ENCODE measurements at regions of chr17 and their contacts with region 1.

Region 1: DNA sequence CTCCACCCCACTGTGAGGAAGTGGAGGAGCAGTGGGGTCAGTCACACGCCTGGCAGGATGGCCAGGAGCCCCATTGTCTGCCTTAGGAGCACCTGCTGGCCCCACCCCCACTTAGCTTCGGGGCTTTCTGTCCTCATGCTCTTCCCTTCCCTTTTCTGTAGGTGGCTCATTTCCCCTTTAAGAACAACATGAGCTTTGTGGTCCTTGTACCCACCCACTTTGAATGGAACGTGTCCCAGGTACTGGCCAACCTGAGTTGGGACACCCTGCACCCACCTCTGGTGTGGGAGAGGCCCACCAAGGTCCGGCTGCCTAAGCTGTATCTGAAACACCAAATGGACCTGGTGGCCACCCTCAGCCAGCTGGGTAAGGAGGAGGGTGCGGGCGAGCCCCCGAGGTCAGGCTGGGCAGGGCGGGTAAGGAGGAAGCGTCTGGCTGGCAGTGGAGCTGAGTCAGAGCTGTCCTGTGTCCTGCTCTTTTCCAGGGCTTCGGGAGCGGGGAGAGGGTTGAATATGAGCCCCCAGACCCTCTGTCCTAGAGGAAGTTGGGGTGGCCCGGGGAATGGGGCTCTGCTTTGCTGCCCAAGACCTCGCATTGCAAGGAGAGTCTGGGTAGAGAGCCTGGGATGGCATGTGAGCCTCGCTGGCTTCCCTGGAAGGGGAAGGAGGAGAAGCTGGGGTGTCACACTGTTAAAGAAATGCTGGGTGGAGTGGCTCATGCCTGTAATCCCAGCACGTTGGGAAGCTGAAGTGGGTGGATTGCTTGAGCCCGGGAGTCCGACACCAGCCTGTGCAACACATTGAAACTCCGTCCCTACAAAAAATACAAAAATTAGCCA is 9.2 kb upstream of the SERPINF1 start:
- DNase-seq: no peak
- ATAC-seq: peak; percentile 86
- H3K4me3 Mint-ChIP-seq: peak overlapping the region; percentile 38
- H3K27ac Mint-ChIP-seq: no peak overlapping the region
- H3K4me1 Mint-ChIP-seq: peaks cover 15% of the 10 kb centered on the region
- H3K27me3 Mint-ChIP-seq: no peaks in the 10 kb centered on the region
- CTCF ChIP-seq: no peak

Region 2: DNA sequence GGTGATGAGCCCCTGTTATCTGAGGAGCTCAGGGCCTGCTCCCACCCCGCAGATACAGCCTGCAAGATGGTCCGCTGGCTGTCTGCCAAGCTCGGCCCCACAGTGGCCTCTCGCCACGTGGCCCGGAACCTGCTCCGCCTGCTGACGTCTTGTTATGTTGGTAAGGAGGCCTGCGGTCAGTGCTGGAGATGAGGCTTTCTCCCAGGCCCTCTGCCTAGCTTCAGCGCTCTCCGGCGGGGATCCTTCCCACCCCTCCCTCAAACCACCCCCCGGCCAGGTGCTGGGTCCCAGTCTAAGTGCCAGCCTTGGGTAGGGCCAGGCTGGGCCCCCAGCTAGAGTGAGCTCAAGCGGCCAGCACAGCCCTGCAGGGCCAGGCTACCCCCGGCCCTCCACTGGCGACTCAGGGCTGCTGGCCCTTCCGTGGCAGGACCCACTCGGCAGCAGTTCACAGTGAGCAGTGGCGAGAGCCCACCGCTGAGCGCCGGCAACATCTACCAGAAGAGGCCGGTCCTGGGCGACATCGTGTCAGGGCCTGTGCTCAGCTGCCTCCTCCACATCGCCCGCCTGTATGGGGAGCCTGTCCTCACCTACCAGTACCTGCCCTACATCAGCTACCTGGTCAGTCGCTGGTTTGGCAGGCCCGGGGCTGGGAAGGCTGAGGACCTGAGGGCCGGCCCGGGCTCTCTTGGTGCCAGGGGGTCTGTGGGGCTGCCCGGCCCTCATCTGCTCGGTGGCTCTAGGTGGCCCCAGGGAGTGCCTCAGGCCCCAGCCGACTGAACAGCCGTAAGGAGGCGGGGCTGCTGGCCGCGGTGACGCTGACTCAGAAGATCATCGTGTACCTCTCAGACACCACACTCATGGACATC is 22.1 kb before region 1 on chr17:
- CTCF ChIA-PET with region 1: interaction called, 4 read pairs
- POLR2A ChIA-PET with region 1: interaction called, 11 read pairs
- intact Hi-C with region 1: no loop called
- DNase-seq: no peak
- ATAC-seq: no peak
- H3K4me3 Mint-ChIP-seq: no peak overlapping the region
- H3K27ac Mint-ChIP-seq: peak overlapping the region; percentile 24
- H3K4me1 Mint-ChIP-seq: peaks cover 56% of the 10 kb centered on the region
- H3K27me3 Mint-ChIP-seq: no peaks in the 10 kb centered on the region
- CTCF ChIP-seq: no peak

Region 3: GRCh38 chr17:1764284-1764683 is 11.6 kb after region 1 on chr17:
- CTCF ChIA-PET with region 1: interaction called, 3 read pairs
- POLR2A ChIA-PET with region 1: interaction called, 17 read pairs
- intact Hi-C with region 1: no loop called
- DNase-seq: peak; percentile 41
- ATAC-seq: peak; percentile 85
- H3K4me3 Mint-ChIP-seq: peak overlapping the region; percentile 53
- H3K27ac Mint-ChIP-seq: peak overlapping the region; percentile 72
- H3K4me1 Mint-ChIP-seq: peaks cover 46% of the 10 kb centered on the region
- H3K27me3 Mint-ChIP-seq: no peaks in the 10 kb centered on the region
- CTCF ChIP-seq: no peak

Region 4: GRCh38 chr17:1769822-1770477 is 17.3 kb after region 1 on chr17:
- CTCF ChIA-PET with region 1: interaction called, 3 read pairs
- POLR2A ChIA-PET with region 1: interaction called, 6 read pairs
- intact Hi-C with region 1: loop called (anchors 2 kb)
- DNase-seq: no peak
- ATAC-seq: peak; percentile 46
- H3K4me3 Mint-ChIP-seq: peak overlapping the region; percentile 58
- H3K27ac Mint-ChIP-seq: peak overlapping the region; percentile 82
- H3K4me1 Mint-ChIP-seq: peaks cover 52% of the 10 kb centered on the region
- H3K27me3 Mint-ChIP-seq: no peaks in the 10 kb centered on the region
- CTCF ChIP-seq: no peak

Region 5: DNA sequence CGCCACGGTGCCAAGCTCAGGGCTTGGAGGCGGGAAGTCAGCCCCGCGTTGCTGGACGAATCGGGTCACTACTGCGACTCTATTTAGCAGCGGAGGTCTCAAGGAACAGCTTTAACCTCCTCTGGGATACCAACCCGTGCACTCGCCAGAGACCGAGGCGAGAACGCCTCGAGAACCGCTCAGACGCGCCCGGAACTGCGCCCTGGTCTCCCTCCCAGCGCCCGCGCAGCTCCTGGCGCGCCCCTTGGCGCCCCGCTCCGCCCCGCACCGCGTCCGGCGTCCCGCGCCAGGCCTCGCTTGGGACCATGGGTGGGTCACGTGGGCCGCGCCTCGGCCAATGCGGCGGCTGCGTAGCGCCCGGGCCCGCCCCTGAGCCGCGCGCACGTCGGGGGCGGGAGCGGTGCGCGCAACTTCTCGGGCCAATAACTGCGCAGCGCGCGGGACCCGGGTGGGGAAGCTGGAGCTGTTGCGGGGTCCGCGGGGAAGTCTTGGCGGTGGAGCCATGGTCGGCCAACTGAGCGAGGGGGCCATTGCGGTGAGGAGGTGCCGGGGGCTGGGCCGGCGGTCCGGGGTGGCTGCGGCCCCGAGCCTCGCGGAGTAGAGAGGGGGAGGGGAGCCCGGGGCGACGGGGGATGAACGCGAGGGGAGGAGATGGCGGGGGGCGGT is 77.1 kb after region 1 on chr17 and contains the starts of genes RPA1 and SMYD4:
- CTCF ChIA-PET with region 1: no interaction called
- POLR2A ChIA-PET with region 1: interaction called, 15 read pairs
- intact Hi-C with region 1: no loop called
- DNase-seq: peak; percentile 94
- ATAC-seq: peak; percentile 94
- H3K4me3 Mint-ChIP-seq: peak within 1 kb of the TSS; percentile 91
- H3K27ac Mint-ChIP-seq: peak within 1 kb of the TSS; percentile 83
- H3K4me1 Mint-ChIP-seq: peaks cover 44% of the 10 kb centered on the region
- H3K27me3 Mint-ChIP-seq: no peaks in the 10 kb centered on the region
- CTCF ChIP-seq: no peak
- total RNA-seq, gene RPA1: 99.8 and 109 TPM in 2 replicates
- total RNA-seq, gene SMYD4: 19.9 and 21.8 TPM in 2 replicates

Region 6: DNA sequence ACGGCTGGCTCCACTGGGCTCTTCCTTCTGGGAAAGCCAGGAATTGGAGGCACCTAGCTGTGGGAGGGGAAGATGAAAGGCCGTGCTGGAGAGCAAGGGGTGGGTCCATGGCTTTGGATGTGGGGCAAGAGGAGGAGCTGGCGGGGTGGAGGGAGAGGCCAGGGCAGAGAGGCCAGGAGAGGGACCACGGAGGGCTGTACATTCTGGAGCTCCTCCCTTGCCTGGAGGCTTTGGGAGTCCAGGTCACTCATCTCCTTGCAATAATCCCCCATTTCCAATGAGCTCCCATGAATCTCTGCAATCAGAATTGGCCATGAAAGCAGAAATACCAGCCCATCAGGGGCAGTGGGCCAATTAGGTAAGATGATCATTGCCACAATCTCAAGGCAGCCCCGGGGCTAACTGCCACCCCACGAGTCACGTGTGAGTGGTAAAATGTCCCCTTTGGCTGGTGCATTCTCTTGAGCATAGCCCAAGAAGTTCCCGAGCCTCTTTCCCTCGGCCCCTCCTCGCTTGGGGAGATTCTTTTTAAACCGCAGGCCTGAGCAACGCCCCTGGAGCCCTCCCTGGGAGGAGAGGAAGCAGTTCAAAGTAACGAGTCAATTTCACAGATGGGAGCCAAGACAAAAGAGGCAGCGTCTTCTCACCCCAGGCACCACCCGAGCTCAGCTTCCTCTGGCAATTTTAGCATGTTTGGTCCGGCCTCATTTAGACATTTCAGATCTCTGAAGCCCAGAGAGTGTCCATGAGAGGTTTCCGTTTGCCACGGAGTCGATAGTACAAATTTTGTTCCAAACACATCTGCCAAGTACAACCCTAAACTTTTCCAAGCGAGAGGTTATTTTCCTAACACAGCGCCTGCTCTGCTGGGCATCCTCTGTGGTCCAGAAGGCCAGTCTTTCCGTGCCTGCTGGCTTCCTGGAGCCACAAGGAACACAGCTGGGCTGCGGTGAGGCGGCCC is 259.0 kb after region 1 on chr17:
- CTCF ChIA-PET with region 1: no interaction called
- POLR2A ChIA-PET with region 1: no interaction called
- intact Hi-C with region 1: no loop called
- DNase-seq: no peak
- ATAC-seq: no peak
- H3K4me3 Mint-ChIP-seq: no peak overlapping the region
- H3K27ac Mint-ChIP-seq: no peak overlapping the region
- H3K4me1 Mint-ChIP-seq: no peaks in the 10 kb centered on the region
- H3K27me3 Mint-ChIP-seq: peaks cover 30% of the 10 kb centered on the region
- CTCF ChIP-seq: no peak

Region 7: GRCh38 chr17:2786176-2786881 is 1033.7 kb after region 1 on chr17:
- CTCF ChIA-PET with region 1: no interaction called
- POLR2A ChIA-PET with region 1: no interaction called
- intact Hi-C with region 1: no loop called
- DNase-seq: peak; percentile 88
- ATAC-seq: peak; percentile 98
- H3K4me3 Mint-ChIP-seq: no peak overlapping the region
- H3K27ac Mint-ChIP-seq: no peak overlapping the region
- H3K4me1 Mint-ChIP-seq: peaks cover 25% of the 10 kb centered on the region
- H3K27me3 Mint-ChIP-seq: no peaks in the 10 kb centered on the region
- CTCF ChIP-seq: peak; percentile 38

Measured in activated B cell treated with CpG ODN at 0.5 μM for 24 hours (primary cell).